Activated T-helper 2 cell treated with anti-CD3 and anti-CD28 coated beads, Interferon-gamma antibody, Interleukin-2, Interleukin-4, amounts not matched to agents 10 μg/mL and 5 μg/mL and 100 μg/mL, durations not matched to agents 14 hours and 24 hours and 36 hours (primary cell): ENCODE measurements at regions of chr6 and their contacts with region 1.

Region 1: DNA sequence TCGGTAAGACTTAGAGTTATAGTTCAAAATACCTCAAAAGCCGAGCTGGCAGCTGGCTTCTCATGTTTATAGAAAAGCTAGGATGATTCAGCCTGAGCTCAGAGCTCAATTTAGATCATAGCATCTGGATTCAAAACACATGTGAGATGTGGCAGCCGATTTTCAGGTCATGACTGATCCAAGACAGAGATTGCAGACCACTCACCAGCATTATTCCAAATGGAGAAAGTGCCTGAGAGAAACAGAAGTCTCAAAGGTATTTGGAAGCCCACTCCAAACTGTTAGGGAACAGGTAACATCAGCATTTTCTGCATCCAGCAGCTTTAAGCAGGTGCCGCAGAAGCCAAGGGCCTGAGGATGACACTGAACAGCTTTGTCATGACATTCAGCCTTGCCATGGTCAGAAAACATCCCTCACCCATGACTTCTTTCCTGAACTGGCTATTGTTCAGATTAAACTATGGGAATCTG is 102.2 kb downstream of the BACH2 start:
- DNase-seq: no peak
- H3K4me3 Mint-ChIP-seq: no peak overlapping the region
- H3K27ac Mint-ChIP-seq: peak overlapping the region; percentile 43
- H3K4me1 Mint-ChIP-seq: peaks cover 63% of the 10 kb centered on the region
- H3K27me3 Mint-ChIP-seq: no peaks in the 10 kb centered on the region

Region 2: DNA sequence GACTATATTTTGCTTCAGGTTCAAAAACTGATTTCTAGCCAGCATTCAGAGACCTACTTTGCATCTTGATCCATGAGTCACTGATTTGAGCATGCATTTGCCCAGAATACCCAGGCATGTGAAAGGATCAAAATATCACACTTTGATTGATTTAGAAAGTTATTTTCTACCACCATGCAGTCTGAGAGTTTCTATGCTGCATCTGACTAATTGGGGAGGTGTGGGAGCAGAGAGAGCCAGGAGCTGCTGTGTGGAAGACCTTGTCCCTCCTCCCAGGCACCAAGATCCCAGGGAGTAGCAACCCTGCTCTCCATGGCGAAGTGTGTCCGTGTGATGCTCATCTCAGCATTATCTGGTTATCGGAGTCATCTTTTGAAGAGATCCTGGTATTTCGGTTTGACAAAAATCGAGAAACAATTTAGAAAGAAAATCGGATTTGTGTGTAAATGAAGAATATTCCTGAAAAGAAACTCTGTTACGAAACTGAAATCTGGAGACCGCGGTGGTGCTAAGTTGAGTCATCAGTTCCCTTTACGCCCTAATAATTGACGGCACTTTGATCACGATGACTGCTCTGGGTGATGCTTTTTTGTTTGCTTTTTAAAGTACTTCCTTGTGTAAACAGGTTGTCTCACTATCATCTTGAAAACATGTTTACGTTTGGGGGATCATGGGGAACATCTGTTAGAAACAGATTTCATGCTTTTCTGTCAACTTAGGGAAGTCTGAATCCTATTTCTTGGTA is 91.2 kb before region 1 on chr6:
- intact Hi-C with region 1: loop called (anchors 5 kb)
- DNase-seq: no peak
- H3K4me3 Mint-ChIP-seq: peak overlapping the region; percentile 56
- H3K27ac Mint-ChIP-seq: peak overlapping the region; percentile 85
- H3K4me1 Mint-ChIP-seq: peaks cover 67% of the 10 kb centered on the region
- H3K27me3 Mint-ChIP-seq: peaks cover 2% of the 10 kb centered on the region

Region 3: DNA sequence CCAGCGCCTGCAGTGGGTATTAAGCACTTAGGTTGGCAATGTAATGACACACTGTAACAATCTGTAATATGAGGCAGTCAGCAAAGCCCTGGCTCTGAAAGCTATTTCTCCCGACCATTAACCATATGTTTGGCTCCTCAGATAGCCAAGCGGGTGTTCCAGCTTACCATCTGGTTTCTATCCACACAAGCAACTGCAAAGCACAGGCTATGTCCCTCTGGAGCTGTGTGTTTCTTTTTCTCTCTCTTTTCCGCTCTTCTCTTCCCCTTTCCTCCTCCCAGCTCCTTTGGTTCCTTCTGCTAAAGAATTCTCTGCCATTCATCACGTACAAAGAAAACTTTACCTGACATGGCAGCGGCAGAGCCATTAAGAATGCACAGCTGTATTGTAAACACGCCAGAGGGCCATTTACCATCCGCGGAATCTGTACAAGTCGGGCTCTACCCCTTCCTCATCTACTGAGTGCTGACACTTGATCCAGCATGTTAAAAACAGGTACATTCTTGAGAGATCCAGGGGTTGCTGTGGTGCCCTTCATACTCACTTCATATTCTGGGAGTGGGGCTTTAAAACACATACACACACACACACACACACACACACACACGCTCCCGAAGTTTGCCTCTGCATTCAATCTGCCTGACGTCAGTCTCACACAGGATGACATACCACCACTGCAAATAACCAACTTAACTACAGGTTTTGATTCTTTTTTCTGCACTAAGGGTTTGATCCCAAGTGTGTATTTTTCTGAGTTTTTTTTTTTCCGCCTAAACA is 25.0 kb after region 1 on chr6:
- intact Hi-C with region 1: loop called (anchors 1 kb)
- DNase-seq: no peak
- H3K4me3 Mint-ChIP-seq: no peak overlapping the region
- H3K27ac Mint-ChIP-seq: no peak overlapping the region
- H3K4me1 Mint-ChIP-seq: peaks cover 25% of the 10 kb centered on the region
- H3K27me3 Mint-ChIP-seq: no peaks in the 10 kb centered on the region

Region 4: GRCh38 chr6:90256698-90257485 is 62.5 kb after region 1 on chr6:
- intact Hi-C with region 1: no loop called
- DNase-seq: no peak
- H3K4me3 Mint-ChIP-seq: no peak overlapping the region
- H3K27ac Mint-ChIP-seq: peak overlapping the region; percentile 90
- H3K4me1 Mint-ChIP-seq: peaks cover 69% of the 10 kb centered on the region
- H3K27me3 Mint-ChIP-seq: no peaks in the 10 kb centered on the region

Region 5: DNA sequence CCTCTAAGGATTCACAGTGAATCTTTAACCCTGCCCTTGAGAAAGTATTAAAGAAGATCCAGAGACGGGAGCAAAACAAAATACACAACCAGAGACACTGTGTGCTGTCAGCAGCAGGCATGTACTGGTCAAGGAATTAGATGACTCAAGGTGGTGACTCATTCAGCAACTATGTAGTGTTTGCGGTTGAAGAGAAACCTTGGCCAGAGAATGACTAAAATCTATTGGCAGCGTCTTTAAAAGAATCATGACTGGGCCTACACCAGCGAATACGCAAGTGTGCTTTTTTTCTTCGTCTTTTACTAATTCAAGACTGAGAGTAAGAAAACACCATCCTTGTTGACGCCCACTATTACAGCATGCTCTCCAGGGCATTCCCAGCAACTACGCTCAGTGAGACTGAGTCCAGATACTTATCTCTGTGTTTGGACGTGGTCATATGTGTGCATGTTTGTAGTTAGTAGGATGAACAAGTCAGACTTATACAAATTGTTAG is 174.7 kb after region 1 on chr6:
- intact Hi-C with region 1: loop called (anchors 5 kb)
- DNase-seq: peak; percentile 29
- H3K4me3 Mint-ChIP-seq: no peak overlapping the region
- H3K27ac Mint-ChIP-seq: peak overlapping the region; percentile 62
- H3K4me1 Mint-ChIP-seq: peaks cover 30% of the 10 kb centered on the region
- H3K27me3 Mint-ChIP-seq: peaks cover 7% of the 10 kb centered on the region

Region 6: GRCh38 chr6:90466154-90466940 is 271.9 kb after region 1 on chr6:
- intact Hi-C with region 1: loop called (anchors 5 kb)
- DNase-seq: no peak
- H3K4me3 Mint-ChIP-seq: peak overlapping the region; percentile 37
- H3K27ac Mint-ChIP-seq: peak overlapping the region; percentile 94
- H3K4me1 Mint-ChIP-seq: peaks cover 93% of the 10 kb centered on the region
- H3K27me3 Mint-ChIP-seq: no peaks in the 10 kb centered on the region